ENCODE measurements at regions of chr6 and their contacts with region 1.

Region 1: DNA sequence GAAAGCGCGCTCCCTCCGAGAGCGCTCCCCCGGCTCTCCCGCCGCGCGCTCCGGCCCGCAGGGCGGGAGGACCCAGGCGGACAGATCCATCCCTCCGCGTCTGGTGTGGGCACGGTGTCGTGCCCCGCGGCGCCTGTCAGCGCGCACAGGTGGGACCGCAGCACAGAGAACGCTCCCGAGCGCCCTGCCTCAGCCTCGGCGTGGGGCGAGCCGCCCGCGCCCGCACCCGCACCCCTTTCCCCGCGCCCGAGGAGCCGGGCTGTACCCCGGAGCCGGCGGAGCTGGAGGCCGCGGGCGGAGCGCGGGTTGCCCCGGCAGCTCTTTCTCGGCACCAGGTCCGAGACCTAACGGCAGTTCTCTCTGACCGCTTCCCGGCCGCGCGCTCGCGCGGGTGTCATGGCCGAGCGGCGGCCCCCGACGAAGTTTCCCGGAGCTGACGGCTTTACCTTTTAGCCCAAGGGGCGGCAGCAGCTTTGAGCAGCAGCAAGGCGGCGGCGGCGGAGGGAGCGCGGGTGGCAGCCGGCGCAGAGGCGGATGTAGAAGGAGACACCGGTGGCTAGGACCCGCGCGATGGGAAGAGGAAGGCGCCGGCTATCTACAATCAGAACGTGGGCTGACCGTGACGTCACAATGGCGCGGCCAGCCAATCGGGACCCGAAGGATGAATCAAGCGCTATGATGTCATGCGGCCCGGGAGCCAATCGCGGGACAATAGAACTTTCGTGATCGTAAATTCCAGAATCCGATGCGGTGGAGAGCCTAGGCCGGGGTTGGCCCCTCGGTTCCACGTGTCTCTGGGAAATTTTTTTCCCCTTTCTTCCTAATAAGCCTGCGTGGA is at the start of gene ELOVL5:
- DNase-seq: peak; percentile 98
- H3K4me3 Mint-ChIP-seq: peak within 1 kb of the TSS; percentile 97
- H3K27ac Mint-ChIP-seq: peak within 1 kb of the TSS; percentile 96
- H3K4me1 Mint-ChIP-seq: peaks cover 46% of the 10 kb centered on the region
- H3K27me3 Mint-ChIP-seq: peaks cover 15% of the 10 kb centered on the region
- total RNA-seq, gene ELOVL5: 157 to 162 TPM

Region 2: DNA sequence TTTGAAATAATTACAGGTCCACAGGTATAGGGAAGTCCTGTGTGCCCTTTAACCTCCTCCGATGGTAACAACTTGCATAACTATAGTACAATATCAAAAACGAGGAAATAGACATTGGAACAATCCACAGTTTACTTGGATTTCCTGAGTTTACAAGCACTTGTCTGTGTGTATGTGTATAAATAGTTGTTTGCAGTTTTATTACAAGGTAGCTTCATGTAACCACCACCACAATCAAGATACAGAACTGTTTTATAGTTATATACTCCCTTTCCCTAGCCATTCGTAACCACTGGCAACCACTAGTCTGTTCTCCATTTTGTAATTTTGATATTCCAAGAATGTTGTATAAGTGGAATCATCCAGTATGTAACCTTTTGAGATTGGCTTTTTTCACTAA is 274.2 kb before region 1 on chr6:
- CTCF ChIA-PET with region 1: no interaction called
- POLR2A ChIA-PET with region 1: no interaction called
- DNase-seq: no peak
- H3K4me3 Mint-ChIP-seq: no peak overlapping the region
- H3K27ac Mint-ChIP-seq: no peak overlapping the region
- H3K4me1 Mint-ChIP-seq: peaks cover 11% of the 10 kb centered on the region
- H3K27me3 Mint-ChIP-seq: no peaks in the 10 kb centered on the region

Region 3: DNA sequence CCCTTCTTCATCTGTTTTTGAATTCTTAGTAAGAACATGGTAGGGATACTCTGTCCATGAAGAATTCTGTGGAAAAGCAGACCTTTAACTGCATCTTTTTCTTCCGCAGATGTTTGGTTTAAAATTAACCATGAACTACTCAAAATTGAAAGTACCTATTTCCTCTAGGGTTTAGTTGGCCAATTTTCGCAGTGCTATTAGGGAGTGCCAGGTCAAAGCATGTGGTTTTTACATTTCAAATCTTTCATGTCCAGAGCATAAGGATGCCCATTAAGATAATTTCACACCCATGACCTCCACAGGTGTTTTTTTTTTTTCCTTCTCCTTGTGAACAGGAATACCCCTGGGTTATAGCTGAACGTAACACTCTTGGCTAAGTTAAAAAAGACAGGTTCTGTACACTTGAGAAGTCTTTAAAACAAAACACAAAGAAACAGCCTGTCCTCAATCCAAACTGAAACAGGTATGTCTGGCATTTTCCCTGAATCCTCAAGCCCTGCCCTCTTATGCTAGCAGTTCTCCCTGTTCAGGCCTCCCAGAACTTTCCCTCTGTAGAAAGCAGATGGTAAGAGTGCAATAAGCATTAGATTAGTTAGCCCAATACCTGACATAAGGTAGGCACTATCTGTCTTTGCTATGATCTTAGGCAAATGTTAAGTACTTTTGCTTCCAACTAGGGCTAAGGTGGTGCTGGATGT is 66.9 kb before region 1 on chr6:
- CTCF ChIA-PET with region 1: interaction called, 3 read pairs
- POLR2A ChIA-PET with region 1: interaction called, 17 read pairs
- DNase-seq: no peak
- H3K4me3 Mint-ChIP-seq: no peak overlapping the region
- H3K27ac Mint-ChIP-seq: no peak overlapping the region
- H3K4me1 Mint-ChIP-seq: peaks cover 46% of the 10 kb centered on the region
- H3K27me3 Mint-ChIP-seq: no peaks in the 10 kb centered on the region

Region 4: DNA sequence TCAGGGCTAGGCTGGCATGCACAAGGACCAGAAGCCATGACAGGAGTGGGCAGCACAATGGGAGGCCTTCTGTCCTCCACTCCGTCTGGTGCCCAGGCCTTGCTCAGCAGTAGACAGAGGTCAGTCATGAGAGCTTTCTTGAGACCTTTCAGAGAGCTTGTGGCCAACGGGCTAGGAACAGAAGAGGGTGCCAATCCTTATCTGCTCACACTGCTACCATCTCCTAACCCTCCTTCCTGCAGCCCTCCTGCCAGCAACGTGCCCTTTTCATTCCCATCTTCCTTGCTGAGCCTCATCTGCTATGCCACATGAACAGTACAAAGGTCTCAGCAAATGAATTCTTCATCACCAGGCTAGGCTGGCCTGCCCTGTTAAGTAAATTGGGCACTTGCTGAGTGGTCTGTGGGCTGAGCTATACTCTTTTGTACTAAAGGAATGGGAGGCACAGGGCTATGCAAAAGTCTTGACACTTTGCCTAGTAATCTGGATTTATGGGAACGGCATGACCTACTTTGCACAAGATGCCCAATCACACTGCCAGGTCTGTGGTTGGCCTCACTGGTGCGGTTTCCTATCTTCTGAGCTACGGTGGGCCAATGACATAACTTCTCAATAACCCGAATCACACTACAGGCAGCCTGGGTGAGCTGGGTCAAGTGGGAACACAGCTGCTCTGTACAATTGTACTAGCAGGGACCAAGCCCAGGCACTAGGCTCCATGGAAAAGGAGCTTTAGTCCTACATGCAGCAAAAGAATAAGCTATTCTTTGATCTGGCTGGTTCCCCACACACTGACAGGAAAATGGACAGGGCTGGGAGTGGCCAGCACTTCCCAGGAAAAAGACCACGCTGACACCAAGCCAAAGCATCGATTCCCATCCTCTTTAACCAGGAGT is 47.7 kb before region 1 on chr6:
- CTCF ChIA-PET with region 1: interaction called, 5 read pairs
- POLR2A ChIA-PET with region 1: interaction called, 46 read pairs
- DNase-seq: peak; percentile 52
- H3K4me3 Mint-ChIP-seq: no peak overlapping the region
- H3K27ac Mint-ChIP-seq: no peak overlapping the region
- H3K4me1 Mint-ChIP-seq: peaks cover 73% of the 10 kb centered on the region
- H3K27me3 Mint-ChIP-seq: no peaks in the 10 kb centered on the region

Region 5: GRCh38 chr6:53322188-53323029 is 26.2 kb before region 1 on chr6:
- CTCF ChIA-PET with region 1: no interaction called
- POLR2A ChIA-PET with region 1: interaction called, 14 read pairs
- DNase-seq: no peak
- H3K4me3 Mint-ChIP-seq: no peak overlapping the region
- H3K27ac Mint-ChIP-seq: peak overlapping the region; percentile 25
- H3K4me1 Mint-ChIP-seq: peaks cover 52% of the 10 kb centered on the region
- H3K27me3 Mint-ChIP-seq: no peaks in the 10 kb centered on the region

Region 6: GRCh38 chr6:53359072-53359842 is 10.7 kb after region 1 on chr6:
- CTCF ChIA-PET with region 1: interaction called, 6 read pairs
- POLR2A ChIA-PET with region 1: interaction called, 98 read pairs
- DNase-seq: peak; percentile 95
- H3K4me3 Mint-ChIP-seq: peak overlapping the region; percentile 87
- H3K27ac Mint-ChIP-seq: peak overlapping the region; percentile 97
- H3K4me1 Mint-ChIP-seq: peaks cover 48% of the 10 kb centered on the region
- H3K27me3 Mint-ChIP-seq: peaks cover 3% of the 10 kb centered on the region